Activated naive CD8-positive, alpha-beta T cell treated with anti-CD3 and anti-CD28 coated beads, Interleukin-2, amount 10 ng/mL, durations not matched to agents 7 days and 5 days (primary cell): ENCODE measurements at regions of chr9 and their contacts with region 1.

Region 1: GRCh38 chr9:112750111-112750767 is at the start of gene SNX30:
- DNase-seq: peak; percentile 89
- ATAC-seq: peak; percentile 59
- H3K4me3 Mint-ChIP-seq: peak within 1 kb of the TSS; percentile 84
- H3K27ac Mint-ChIP-seq: peak within 1 kb of the TSS; percentile 89
- H3K4me1 Mint-ChIP-seq: peaks cover 59% of the 10 kb centered on the region
- H3K27me3 Mint-ChIP-seq: no peaks in the 10 kb centered on the region
- total RNA-seq, gene SNX30: 9.0 to 9.6 TPM

Region 2: GRCh38 chr9:112486221-112487007 is 263.8 kb before region 1 on chr9 and contains the start of gene KIAA1958:
- POLR2A ChIA-PET with region 1: interaction called, 11 read pairs
- DNase-seq: peak; percentile 92
- ATAC-seq: peak; percentile 90
- H3K4me3 Mint-ChIP-seq: peak within 1 kb of the TSS; percentile 98
- H3K27ac Mint-ChIP-seq: peak within 1 kb of the TSS; percentile 96
- H3K4me1 Mint-ChIP-seq: peaks cover 32% of the 10 kb centered on the region
- H3K27me3 Mint-ChIP-seq: no peaks in the 10 kb centered on the region
- total RNA-seq, gene KIAA1958: 13.3 to 15.0 TPM

Region 3: DNA sequence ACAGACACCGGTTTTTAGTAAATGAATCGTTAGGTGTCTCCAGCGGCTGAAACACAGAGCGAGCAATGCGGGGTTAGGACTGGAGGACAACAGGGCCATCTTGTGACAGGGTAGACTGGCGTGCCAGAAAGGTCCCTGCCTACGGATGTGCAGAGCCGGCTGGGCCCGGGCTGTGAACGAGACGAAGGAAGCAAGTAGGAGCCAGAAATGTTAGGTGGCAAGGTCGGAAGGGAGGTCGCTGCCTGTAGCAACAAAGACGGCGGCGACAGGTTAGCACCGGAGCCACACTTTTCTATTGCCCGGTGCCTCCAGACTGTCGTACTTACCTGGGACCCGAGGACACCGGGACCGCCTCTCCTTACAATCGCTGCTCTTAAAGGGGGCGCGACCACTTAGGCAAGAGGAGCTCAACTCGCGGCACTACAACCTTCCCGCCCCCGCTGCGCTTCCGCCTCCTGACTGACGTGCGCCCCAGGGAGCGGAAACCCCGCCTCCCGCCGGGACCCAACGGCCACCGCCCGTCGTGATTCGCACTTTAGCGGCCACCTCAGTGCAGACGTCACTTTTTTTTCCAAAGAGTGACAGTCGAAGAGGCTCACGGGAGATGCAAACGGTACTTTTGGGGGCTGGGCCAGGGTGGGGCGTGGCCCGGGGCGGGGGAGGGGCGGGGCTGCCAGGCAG is 32.4 kb before region 1 on chr9 and contains the start of gene INIP:
- POLR2A ChIA-PET with region 1: interaction called, 22 read pairs
- DNase-seq: peak; percentile 97
- ATAC-seq: peak; percentile 93
- H3K4me3 Mint-ChIP-seq: peak within 1 kb of the TSS; percentile 97
- H3K27ac Mint-ChIP-seq: peak within 1 kb of the TSS; percentile 95
- H3K4me1 Mint-ChIP-seq: peaks cover 26% of the 10 kb centered on the region
- H3K27me3 Mint-ChIP-seq: no peaks in the 10 kb centered on the region
- total RNA-seq, gene INIP: 29.4 to 29.8 TPM

Region 4: DNA sequence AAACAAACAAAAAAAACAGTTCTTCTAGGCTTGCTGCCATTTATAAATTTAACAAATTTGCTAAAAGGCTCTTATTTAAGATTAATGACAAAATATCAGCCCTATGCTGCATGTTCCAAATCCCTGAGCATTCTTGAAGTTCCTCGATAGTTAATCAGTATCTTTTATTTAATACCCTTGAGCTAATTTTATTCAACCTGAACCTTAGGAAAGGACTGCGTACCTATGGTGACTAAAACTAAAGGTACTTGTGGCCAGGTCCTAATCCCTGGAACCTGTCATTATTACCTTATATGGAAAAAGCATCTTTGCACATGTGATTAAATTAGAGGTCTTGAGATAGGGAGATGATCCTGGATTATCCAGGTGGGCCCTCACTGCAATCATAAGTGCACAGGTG is 21.8 kb before region 1 on chr9:
- POLR2A ChIA-PET with region 1: no interaction called
- DNase-seq: no peak
- ATAC-seq: no peak
- H3K4me3 Mint-ChIP-seq: no peak overlapping the region
- H3K27ac Mint-ChIP-seq: no peak overlapping the region
- H3K4me1 Mint-ChIP-seq: no peaks in the 10 kb centered on the region
- H3K27me3 Mint-ChIP-seq: peaks cover 2% of the 10 kb centered on the region